Right ventricle myocardium inferior (tissue), 1 donor: ENCODE measurements at regions of chr7 and their contacts with region 1.

Region 1: GRCh38 chr7:191981-192649 is at the start of gene FAM20C:
- DNase-seq: peak; percentile 94
- ATAC-seq: peak; percentile 90
- total RNA-seq, gene FAM20C: 26.1 TPM

Region 2: GRCh38 chr7:149856-150636 is 42.1 kb before region 1 on chr7:
- intact Hi-C with region 1: loop called (anchors 2 kb)
- DNase-seq: peak; percentile 76
- ATAC-seq: peak; percentile 26

Region 3: DNA sequence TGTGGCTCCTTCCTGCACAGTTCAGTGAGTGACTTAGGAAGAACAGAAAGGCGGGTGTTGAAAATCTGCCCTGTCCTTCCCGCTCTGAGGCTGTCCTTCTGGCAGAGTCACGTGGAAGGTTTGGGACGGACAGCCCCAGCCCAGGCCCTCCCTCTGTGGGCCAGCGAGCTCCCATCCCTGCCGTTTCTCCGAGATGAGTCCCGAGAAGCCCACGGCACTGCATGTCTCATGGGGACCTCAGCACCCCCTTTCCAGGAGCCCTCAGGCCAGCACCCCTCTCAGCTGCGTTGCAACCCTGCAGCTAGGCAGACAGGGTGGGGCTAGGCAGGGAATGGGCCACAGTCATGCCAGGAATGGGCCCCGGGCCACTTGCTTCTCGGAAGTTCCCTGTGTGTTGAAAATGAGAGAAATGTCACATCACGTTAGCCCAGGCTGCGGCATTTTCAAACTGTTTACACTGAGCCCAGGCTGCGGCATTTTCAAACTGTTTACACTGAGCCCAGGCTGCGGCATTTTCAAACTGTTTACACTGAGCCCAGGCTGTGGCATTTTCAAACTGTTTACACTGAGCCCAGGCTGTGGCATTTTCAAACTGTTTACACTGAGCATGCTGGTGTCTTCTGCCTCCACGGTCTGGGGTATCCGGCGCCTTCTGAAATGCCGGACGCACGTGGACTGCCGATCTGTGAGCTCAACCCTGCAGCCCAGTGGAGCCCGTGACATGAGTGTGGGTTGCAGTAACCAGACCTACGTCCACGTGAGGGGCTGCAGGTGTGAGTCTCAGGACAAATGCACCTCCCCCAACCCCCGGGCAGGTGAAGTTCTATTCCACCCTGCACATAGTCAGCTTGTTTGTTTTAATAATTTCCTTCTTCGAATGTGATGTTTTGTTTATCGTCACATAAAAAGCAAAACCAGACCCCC is 42.8 kb after region 1 on chr7:
- intact Hi-C with region 1: loop called (anchors 5 kb)
- DNase-seq: peak; percentile 82
- ATAC-seq: peak; percentile 86